Activated CD4-positive, alpha-beta T cell treated with anti-CD3 and anti-CD28 coated beads, Interleukin-2, amount 10 ng/mL, durations not matched to agents 7 days and 5 days (primary cell): ENCODE measurements at regions of chr2 and their contacts with region 1.

Region 1: DNA sequence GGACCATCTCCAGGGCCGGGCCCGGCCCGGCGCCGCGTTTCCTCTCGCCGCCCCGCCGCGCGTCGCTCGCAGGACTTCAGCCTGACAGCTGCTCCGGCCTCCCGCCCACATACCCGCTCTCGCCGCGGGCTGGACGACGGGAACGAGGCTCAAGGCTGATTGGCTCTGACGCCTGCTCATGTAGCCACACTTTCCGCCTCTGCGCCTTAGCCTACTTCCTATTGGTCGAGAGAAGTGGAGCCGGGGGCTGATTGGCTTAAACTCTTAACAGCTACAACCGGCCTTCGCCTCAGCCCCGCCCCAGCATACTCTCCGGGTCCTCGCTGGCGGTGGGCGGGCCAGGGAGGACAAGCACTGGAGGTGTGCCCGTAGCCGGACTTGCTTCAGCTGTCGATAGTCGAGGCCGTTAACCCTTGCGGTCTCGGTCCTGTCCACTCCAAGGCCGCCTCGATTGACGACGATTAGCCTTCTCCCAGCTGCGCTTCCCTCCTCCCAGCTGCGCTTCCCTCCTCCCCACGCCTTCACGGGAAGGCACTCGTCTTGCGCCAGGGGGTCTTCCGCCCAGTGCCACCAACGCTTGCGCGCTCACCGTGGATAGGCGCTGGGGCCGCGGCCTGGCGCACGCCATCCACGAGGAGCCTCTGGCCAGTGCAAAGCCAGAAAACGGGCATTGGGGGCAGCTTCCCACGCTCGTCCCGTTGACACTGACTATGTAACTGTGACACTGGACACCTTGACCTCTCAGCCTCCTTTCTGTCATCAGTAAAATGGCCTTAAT is at the start of gene PRADC1:
- DNase-seq: peak; percentile 98
- H3K4me3 Mint-ChIP-seq: peak within 1 kb of the TSS; percentile 89
- H3K27ac Mint-ChIP-seq: peak within 1 kb of the TSS; percentile 93
- H3K4me1 Mint-ChIP-seq: peaks cover 37% of the 10 kb centered on the region
- H3K27me3 Mint-ChIP-seq: no peaks in the 10 kb centered on the region
- total RNA-seq, gene PRADC1: 12.5 to 13.7 TPM

Region 2: DNA sequence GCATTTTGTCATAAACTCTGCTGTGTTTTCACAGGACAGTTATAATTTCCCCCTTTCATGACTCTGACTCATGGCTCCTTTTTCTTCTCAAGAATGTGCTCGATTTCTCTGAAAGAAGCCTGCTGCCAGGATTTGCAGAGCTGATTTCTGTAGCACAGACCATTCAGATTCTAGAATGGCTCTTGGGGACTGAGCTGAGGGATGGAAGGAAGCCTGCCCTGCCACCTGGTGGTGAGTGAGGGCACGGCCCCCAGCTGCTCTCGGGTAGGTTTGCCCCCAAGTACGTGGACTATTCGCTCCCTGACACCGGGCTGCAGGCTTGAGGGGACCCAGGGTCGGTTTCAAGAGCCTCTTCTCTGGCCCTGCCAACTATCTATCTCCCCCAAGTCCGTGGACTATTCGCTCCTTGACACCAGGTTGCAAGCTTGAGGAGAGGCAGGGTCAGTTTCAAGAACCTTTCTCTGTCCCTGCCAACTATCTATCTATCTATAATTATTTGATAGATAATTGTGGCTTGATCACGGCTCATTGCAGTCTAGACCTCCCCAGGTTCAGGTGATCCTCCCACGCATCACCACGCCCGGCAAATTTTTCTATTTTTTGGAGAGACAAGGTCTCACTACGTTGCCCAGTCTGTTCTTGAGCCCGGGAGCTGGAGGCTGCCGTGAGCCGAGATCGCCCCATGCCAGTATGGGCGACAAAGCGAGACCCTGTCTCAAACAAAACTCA is 20.7 kb before region 1 on chr2:
- CTCF ChIA-PET with region 1: interaction called, 45 read pairs
- POLR2A ChIA-PET with region 1: interaction called, 4 read pairs
- DNase-seq: peak; percentile 78
- H3K4me3 Mint-ChIP-seq: no peak overlapping the region
- H3K27ac Mint-ChIP-seq: peak overlapping the region; percentile 34
- H3K4me1 Mint-ChIP-seq: peaks cover 31% of the 10 kb centered on the region
- H3K27me3 Mint-ChIP-seq: peaks cover 9% of the 10 kb centered on the region

Region 3: GRCh38 chr2:73243884-73244570 is 10.7 kb after region 1 on chr2:
- CTCF ChIA-PET with region 1: interaction called, 17 read pairs
- POLR2A ChIA-PET with region 1: no interaction called
- DNase-seq: no peak
- H3K4me3 Mint-ChIP-seq: no peak overlapping the region
- H3K27ac Mint-ChIP-seq: peak overlapping the region; percentile 2
- H3K4me1 Mint-ChIP-seq: peaks cover 11% of the 10 kb centered on the region
- H3K27me3 Mint-ChIP-seq: no peaks in the 10 kb centered on the region